Activated B cell treated with CpG ODN at 0.5 μM for 24 hours (primary cell): ENCODE measurements at regions of chr11 and their contacts with region 1.

Region 1: DNA sequence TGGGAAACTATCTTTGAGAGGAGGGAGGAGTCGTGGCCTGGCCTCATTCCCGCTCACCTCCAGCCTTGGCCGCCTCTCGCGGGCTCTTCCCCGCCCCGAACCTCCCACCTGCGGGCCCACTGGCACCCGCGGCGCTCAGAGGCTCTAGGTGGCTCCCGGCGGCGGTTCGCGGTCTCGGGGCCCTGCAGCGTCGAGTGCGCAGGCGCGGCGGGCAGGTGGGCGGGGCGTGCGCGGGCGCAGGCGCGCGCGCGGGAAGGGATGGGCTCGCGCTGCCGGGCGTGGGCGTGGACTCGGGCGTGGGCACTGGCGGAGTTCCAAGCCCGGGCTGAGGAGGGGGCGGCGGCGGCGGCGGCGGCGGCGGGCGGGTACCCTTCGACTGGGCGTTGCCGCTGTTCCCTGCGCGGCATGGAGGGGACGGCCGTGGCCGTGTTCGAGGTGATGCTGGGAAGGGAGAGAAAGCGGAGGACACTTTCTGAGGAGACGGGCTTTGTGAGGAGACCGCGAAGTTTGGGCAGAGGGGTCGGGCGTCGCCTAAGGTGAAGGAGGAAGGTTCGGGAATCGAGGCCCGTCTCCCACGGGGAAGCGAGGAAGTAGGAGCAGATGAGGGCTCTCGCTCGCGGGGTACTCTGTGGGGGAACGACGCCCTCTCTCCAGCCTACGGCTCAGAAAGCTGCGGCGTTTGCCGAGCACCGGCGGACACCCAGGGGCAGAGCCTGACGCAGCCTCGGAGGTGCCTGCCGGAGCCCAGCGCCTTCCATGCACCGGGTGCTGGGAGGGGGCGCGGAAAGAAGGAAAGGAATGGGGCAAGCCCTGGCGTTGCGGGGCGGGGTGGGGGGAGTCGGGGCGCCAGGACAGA is 15.7 kb upstream of the SPTBN2 start:
- DNase-seq: peak; percentile 95
- ATAC-seq: peak; percentile 90
- H3K4me3 Mint-ChIP-seq: peak overlapping the region; percentile 96
- H3K27ac Mint-ChIP-seq: peak overlapping the region; percentile 89
- H3K4me1 Mint-ChIP-seq: peaks cover 26% of the 10 kb centered on the region
- H3K27me3 Mint-ChIP-seq: no peaks in the 10 kb centered on the region
- CTCF ChIP-seq: no peak

Region 2: DNA sequence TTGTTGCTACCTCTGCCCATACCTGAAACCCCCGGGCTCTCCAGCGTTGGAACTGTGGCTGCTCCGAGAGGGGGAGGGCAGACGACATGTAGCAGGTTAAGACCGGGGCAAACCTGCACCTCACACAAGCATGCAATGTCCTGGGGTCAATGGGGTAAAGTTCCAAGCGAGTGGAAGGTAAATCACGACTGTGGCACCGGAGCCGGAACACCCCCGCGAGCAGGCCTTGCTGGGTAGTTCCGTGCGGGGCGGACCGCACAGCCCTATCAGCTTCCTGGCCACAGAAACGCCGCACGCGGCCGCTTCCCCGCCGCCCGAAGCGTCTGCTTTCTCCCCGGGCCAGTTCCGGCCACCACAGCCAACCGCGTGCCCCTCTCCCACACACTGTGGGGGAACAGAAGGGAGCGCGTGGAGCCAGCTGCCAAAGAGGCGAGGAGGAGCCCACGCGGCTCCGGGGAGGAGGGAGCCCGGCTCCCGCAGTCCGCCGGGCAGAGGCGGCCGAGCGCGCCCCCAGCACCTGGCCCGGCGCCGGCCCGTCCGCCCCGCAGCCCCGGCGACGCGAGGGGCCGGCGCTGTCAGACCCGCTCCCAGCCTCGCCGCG is 17.3 kb before region 1 on chr11:
- CTCF ChIA-PET with region 1: no interaction called
- POLR2A ChIA-PET with region 1: interaction called, 8 read pairs
- intact Hi-C with region 1: loop called (anchors 2 kb)
- DNase-seq: peak; percentile 40
- ATAC-seq: peak; percentile 64
- H3K4me3 Mint-ChIP-seq: peak overlapping the region; percentile 78
- H3K27ac Mint-ChIP-seq: no peak overlapping the region
- H3K4me1 Mint-ChIP-seq: peaks cover 18% of the 10 kb centered on the region
- H3K27me3 Mint-ChIP-seq: peaks cover 35% of the 10 kb centered on the region
- CTCF ChIP-seq: no peak

Region 3: DNA sequence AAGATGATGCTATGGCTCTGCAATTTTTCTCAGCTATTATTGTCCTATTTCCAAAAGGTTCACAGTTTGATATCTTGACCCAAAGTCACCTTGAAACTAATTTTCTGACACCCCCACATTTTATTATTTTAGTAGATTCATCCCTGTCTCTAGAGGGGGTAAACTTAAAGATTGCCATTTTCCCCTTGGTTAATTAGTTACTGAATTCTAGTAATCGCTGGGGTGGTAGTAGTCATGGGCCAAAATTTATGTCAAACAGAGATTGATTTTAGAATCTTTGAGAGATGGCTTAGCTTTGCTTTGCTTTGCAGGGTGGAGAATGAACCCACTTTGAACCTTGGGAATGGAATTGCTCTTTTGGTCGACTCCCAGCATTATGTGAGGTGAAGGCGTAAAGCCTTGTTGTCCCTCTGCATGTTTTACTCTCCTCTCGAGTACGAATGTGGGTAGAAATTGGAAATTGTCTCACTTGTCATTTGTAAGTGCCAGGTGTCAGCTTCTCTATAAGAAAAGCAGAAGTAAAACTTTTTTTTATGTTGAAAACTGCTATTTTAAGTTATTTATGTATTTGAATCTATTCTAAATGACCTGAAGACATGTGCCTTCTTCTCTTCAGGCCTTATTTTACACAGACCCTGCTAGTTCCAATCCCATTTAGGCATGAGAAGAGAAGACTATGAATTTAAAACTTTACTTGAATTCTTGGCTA is 56.2 kb after region 1 on chr11:
- CTCF ChIA-PET with region 1: no interaction called
- POLR2A ChIA-PET with region 1: interaction called, 6 read pairs
- intact Hi-C with region 1: loop called (anchors 1 kb)
- DNase-seq: no peak
- ATAC-seq: peak; percentile 77
- H3K4me3 Mint-ChIP-seq: peak overlapping the region; percentile 42
- H3K27ac Mint-ChIP-seq: peak overlapping the region; percentile 86
- H3K4me1 Mint-ChIP-seq: peaks cover 68% of the 10 kb centered on the region
- H3K27me3 Mint-ChIP-seq: no peaks in the 10 kb centered on the region
- CTCF ChIP-seq: no peak